Natural killer cell (primary cell): ENCODE measurements at regions of chr1 and their contacts with region 1.

Region 1: GRCh38 chr1:66331657-66332547 is 202.1 kb upstream of the SGIP1 start:
- DNase-seq: peak; percentile 26 to 68
- ATAC-seq: peak; percentile 26 to 42 (median 40)
- H3K4me3 ChIP-seq: peak overlapping the region; percentile 62
- H3K4me3 Mint-ChIP-seq: peak overlapping the region; percentile 93
- H3K27ac ChIP-seq: peak overlapping the region; percentile 97
- H3K27ac Mint-ChIP-seq: peak overlapping the region; percentile 75 to 95
- H3K4me1 ChIP-seq: peaks cover 35% of the 10 kb centered on the region
- H3K4me1 Mint-ChIP-seq: peaks cover 71 to 75% of the 10 kb centered on the region in 2 donors
- H3K27me3 ChIP-seq: no peaks in the 10 kb centered on the region
- H3K27me3 Mint-ChIP-seq: peaks cover 0 to 2% of the 10 kb centered on the region in 2 donors
- CTCF ChIP-seq: no peak

Region 2: DNA sequence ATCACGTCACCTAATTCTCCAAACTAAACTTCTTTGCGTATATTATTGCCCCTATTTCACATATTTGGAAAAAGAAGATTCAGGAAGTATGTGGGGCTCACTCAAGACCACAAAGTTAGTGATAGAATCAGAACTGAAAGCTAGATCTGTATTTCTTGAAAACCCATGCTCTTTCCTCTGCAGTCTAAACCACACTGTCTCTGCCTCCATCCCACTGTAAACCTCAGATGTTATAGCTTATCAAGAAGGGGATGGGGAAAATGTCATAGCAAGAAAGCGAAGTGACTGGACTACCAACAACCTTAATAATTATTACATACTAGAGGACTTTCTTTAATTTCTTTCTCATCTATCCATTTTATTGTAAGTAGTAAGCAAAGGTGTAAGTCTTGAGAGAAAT is 55.7 kb before region 1 on chr1:
- intact Hi-C with region 1: loop called (anchors 5 kb)
- DNase-seq: peak in 1 of 2 donors; percentile 65
- ATAC-seq: peak; percentile 57 to 81 (median 75)
- H3K4me3 ChIP-seq: no peak overlapping the region
- H3K4me3 Mint-ChIP-seq: peak overlapping the region; percentile 69
- H3K27ac ChIP-seq: peak overlapping the region; percentile 25
- H3K27ac Mint-ChIP-seq: peak overlapping the region; percentile 64 to 74
- H3K4me1 ChIP-seq: peaks cover 24% of the 10 kb centered on the region
- H3K4me1 Mint-ChIP-seq: peaks cover 29 to 31% of the 10 kb centered on the region in 2 donors
- H3K27me3 ChIP-seq: no peaks in the 10 kb centered on the region
- H3K27me3 Mint-ChIP-seq: peaks cover 0 to 21% of the 10 kb centered on the region in 2 donors
- CTCF ChIP-seq: no peak

Region 3: DNA sequence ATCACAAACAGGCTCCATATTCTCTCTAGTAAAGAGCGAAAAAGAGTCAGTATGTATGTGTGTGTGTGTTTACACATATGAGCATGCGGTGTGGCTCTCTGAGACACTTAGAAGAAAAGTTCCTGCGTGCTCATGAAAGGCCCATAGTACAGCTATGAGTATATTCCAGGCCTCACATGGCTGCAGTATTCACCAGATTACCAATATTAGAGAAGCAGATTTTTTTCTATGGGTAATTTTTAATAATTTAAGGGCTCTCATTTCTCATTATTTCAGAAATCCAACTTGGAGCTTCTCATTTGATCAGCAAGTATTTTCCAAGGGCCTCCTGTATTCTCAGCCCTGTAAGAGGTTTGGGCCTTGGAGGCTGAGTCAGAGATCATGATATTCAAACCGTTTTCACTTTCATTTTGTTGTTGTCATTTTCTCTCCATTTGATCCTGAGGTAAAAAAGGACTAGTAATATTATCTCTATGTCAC is 30.9 kb before region 1 on chr1:
- intact Hi-C with region 1: loop called (anchors 5 kb)
- DNase-seq: peak in 1 of 2 donors; percentile 76
- ATAC-seq: peak; percentile 69 to 86 (median 74)
- H3K4me3 ChIP-seq: no peak overlapping the region
- H3K4me3 Mint-ChIP-seq: peak overlapping the region; percentile 86
- H3K27ac ChIP-seq: peak overlapping the region; percentile 39
- H3K27ac Mint-ChIP-seq: peak overlapping the region; percentile 87
- H3K4me1 ChIP-seq: peaks cover 20% of the 10 kb centered on the region
- H3K4me1 Mint-ChIP-seq: peaks cover 24 to 29% of the 10 kb centered on the region in 2 donors
- H3K27me3 ChIP-seq: no peaks in the 10 kb centered on the region
- H3K27me3 Mint-ChIP-seq: no peaks in the 10 kb centered on the region
- CTCF ChIP-seq: no peak